ENCODE measurements at regions of chr4 and their contacts with region 1.

Region 1: GRCh38 chr4:2583517-2583916 is 47.1 kb downstream of the FAM193A start:
- DNase-seq: peak; percentile 18 to 86
- H3K4me3 ChIP-seq: peak overlapping the region; percentile 14; the same call in 1 of the 2 replicates
- H3K27ac ChIP-seq: no peak overlapping the region
- H3K4me1 ChIP-seq: peaks cover 24% of the 10 kb centered on the region
- H3K27me3 ChIP-seq: no peaks in the 10 kb centered on the region
- CTCF ChIP-seq: no peak

Region 2: GRCh38 chr4:1410491-1411325 is 1172.8 kb before region 1 on chr4:
- CTCF ChIA-PET with region 1: no interaction called
- POLR2A ChIA-PET with region 1: no interaction called
- intact Hi-C with region 1: no loop called
- DNase-seq: peak in 1 of 2 experiments; percentile 29
- H3K4me3 ChIP-seq: no peak overlapping the region
- H3K27ac ChIP-seq: no peak overlapping the region
- H3K4me1 ChIP-seq: no peaks in the 10 kb centered on the region
- H3K27me3 ChIP-seq: peaks cover 34% of the 10 kb centered on the region
- CTCF ChIP-seq: no peak

Region 3: DNA sequence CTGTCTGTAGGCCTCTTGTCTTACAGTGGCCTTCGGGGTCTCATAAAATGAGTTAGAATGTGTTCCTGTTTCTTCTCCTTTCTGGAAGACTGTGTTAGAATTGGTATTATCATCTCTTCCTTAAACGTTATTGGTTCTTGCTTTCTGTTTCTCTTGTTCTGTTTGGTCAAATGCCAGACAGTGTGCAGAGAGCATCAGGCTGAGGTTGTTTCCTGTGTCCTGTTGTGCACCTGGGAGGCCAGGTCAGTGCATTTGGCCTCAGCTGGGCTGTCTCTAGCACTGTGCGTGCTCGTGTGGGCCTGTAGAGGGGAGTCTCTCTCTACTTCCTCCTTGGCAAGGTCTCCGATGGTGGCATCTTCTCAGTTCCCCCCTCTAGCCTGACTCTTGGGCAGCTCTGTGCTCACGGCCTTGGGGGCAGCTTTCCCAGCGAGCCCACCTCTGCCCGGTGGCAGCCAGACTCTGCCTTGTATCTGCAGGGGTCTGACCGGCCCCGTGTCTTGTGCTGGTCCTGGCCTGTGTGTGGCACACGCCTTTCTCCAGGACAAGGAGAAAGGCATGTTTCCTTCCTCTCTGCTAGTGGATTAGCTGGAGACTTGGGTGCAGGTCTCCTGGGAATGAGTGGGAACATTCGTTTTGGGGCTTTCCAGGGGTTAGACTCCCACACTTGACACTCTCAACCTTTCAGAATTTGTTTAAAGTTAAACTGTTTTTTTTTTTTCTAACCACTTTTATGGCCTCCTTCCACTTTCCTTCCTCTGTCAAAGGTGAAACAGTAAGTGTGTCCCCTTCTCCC is 15.2 kb after region 1 on chr4:
- CTCF ChIA-PET with region 1: no interaction called
- POLR2A ChIA-PET with region 1: interaction called, 14 read pairs
- intact Hi-C with region 1: no loop called
- DNase-seq: no peak
- H3K4me3 ChIP-seq: no peak overlapping the region
- H3K27ac ChIP-seq: no peak overlapping the region
- H3K4me1 ChIP-seq: no peaks in the 10 kb centered on the region
- H3K27me3 ChIP-seq: no peaks in the 10 kb centered on the region
- CTCF ChIP-seq: no peak

Measured in PC-9 (cell line).